ENCODE measurements at regions of chr12 and their contacts with region 1.

Region 1: DNA sequence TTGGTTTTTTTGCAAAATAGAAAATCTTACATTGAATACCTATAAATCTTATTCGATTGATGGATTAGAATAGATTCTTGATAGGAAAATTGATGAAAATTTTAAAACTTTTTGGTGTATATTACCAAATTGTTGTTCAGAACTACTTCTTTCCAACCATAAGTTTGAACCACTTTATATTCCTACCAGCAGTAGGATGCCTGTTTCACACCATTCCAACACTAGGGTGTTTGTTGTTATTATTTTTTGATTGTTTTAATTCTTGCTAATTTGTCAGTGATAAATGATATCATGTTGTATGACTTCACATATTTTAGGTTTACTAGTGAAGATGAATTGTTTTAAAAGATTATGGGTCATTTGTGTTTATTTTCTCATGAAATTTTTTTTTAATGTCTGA is 43.4 kb downstream of the UTP20 start:
- DNase-seq: no peak
- ATAC-seq: no peak
- H3K4me3 Mint-ChIP-seq: no peak overlapping the region
- H3K27ac Mint-ChIP-seq: no peak overlapping the region
- H3K4me1 Mint-ChIP-seq: no peaks in the 10 kb centered on the region
- H3K27me3 Mint-ChIP-seq: no peaks in the 10 kb centered on the region

Region 2: DNA sequence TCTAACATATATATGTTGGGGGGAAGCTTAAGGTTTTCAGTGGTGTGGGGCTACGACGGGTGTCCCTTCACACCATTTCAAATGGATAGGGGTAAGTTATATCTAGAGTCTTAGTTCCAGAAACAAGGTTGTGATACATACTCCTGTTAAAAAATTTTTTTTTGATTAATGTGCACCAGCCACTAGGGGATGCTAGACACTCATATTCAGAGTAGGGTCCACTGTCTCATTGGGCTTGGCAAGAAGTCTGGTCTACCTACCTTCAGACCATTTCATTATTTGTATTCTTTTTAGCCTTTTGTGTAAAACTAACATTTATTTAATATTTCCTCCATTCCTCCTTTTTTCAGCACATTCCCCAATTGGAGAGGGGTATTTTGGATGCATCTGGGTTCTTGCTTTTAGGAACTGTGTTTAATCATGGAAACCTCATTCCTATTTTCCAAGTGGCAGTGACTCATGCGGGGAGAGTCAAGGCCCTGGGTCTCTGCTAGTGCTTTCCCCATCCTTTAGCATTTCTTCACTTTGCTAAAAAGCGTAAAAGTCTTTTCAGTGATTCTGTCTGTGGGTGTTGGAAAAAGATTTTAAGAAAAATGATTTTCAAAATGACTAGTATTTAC is 495.2 kb before region 1 on chr12:
- CTCF ChIA-PET with region 1: interaction called, 5 read pairs
- POLR2A ChIA-PET with region 1: no interaction called
- intact Hi-C with region 1: loop called in 1 of 2 experiments (anchors 1 kb)
- DNase-seq: peak; percentile 6
- ATAC-seq: no peak
- H3K4me3 Mint-ChIP-seq: no peak overlapping the region
- H3K27ac Mint-ChIP-seq: no peak overlapping the region
- H3K4me1 Mint-ChIP-seq: no peaks in the 10 kb centered on the region
- H3K27me3 Mint-ChIP-seq: no peaks in the 10 kb centered on the region

Measured in activated CD4-positive, alpha-beta T cell treated with anti-CD3 and anti-CD28 coated beads for 36 hours (primary cell).